PC-9 (cell line): ENCODE measurements at regions of chr7 and their contacts with region 1.

Region 1: DNA sequence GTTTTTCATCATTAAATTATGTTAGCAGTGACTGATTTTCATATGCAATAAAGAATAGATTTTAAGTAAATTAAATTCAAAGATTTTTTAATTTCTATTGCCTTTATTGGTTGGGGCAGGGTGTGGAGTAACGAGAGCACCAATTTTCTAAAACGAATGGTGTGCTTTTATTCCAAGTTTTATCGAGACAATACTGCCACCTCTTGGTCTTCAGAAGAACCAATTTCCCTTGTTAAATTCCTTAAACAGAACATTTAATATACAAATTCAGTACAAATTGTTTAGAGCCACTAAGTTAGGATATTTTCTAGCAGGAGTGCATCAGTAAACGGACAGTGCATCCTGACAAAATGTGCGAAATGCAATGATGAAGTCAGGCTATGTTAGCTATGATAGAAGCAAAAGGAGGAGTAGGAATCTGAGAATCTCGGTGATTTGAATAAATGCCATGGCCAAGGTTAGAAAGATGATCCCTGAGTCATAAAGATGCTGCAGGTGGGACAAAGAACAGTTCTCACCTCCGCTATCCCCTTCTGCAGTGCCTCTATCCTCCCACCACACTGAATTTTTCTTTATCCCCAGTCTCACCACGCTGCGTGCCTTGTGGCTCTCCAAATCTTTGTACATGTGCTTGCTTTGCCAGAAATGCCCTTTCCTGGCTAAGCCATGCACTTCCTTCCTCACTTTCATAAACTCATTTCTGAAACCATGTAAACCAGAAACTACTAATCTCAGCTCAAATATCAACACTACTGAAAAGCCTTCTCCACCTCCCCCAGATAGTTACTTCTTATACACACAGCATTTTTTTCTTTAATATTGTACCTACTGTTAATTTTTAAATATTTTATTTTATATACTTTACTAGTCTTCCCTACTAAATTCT is 31.9 kb upstream of the AGBL3 start:
- DNase-seq: peak in 1 of 2 experiments; percentile 40
- H3K4me3 ChIP-seq: no peak overlapping the region
- H3K27ac ChIP-seq: no peak overlapping the region
- H3K4me1 ChIP-seq: no peaks in the 10 kb centered on the region
- H3K27me3 ChIP-seq: no peaks in the 10 kb centered on the region
- CTCF ChIP-seq: peak; percentile 87

Region 2: DNA sequence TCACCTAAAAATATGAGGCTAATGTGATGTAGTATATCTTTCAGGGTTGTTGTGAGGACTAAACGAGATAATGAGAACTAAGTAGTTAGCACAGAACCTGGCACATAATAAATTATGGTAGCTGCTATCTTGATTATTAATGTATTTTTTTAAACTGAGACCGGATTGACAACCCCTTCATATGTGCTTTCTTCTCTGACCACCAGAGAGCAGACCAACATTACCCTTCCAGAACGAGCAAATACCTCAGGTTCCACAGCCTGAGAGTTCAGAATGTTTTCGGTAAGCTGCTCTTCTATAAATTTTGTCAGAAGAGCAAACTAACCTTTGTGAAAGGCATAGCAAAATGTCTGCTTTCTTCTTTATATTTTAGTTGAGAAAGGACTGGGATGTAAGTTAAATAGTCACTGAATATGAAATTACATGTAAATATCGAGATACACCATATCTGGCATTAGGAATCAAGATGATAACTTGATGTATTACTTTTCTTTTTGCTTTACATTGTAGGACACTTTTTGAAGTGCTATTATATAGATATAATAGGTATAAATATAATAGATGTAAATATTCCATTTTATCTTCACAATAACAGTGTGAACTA is 321.4 kb before region 1 on chr7:
- CTCF ChIA-PET with region 1: no interaction called
- POLR2A ChIA-PET with region 1: no interaction called
- intact Hi-C with region 1: loop called (anchors 1 kb)
- DNase-seq: peak in 1 of 2 experiments; percentile 32
- H3K4me3 ChIP-seq: no peak overlapping the region
- H3K27ac ChIP-seq: no peak overlapping the region
- H3K4me1 ChIP-seq: peaks cover 6% of the 10 kb centered on the region
- H3K27me3 ChIP-seq: no peaks in the 10 kb centered on the region
- CTCF ChIP-seq: peak; percentile 83